KBM-7 (cell line): ENCODE measurements at regions of chr6 and their contacts with region 1.

Region 1: GRCh38 chr6:42661540-42662153 is 60.8 kb downstream of the PRPH2 start:
- DNase-seq: peak; percentile 91

Region 2: GRCh38 chr6:42748203-42748898 is 86.7 kb after region 1 on chr6:
- in situ Hi-C with region 1: no loop called
- DNase-seq: no peak

Region 3: GRCh38 chr6:42864602-42865001 is 203.0 kb after region 1 on chr6:
- in situ Hi-C with region 1: loop called (anchors 25 kb)
- DNase-seq: no peak